ENCODE measurements at regions of chr2 and their contacts with region 1.

Region 1: DNA sequence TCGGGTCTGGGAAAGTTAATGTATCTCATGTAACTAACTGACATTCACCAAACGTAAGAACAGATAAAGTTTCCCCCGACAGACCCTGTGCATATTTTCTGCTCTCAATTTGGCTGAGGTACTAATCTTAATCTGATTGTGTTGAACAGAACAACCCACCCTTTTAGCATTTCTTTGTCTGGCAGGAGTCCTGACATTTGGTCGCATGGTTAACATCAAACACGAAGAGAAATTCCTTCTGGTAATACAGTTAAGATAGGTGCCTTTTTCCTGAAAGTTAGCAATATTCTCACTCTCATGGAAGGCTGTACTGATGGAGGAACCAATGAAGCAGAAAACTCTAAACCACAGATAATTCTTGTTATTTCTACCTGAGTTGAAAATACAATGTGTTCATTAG is 520.8 kb downstream of the PARD3B start:
- DNase-seq: no peak
- H3K4me3 ChIP-seq: no peak overlapping the region
- CTCF ChIP-seq: no peak

Region 2: GRCh38 chr2:205017381-205017780 is 48.7 kb before region 1 on chr2:
- in situ Hi-C with region 1: no loop called
- DNase-seq: no peak
- H3K4me3 ChIP-seq: no peak overlapping the region
- CTCF ChIP-seq: no peak

Region 3: GRCh38 chr2:205107810-205108209 is 41.7 kb after region 1 on chr2:
- in situ Hi-C with region 1: loop called (anchors 5 kb)
- DNase-seq: no peak
- H3K4me3 ChIP-seq: no peak overlapping the region
- CTCF ChIP-seq: no peak

Measured in astrocyte of the cerebellum (primary cell).